ENCODE measurements at regions of chr5 and their contacts with region 1.

Region 1: DNA sequence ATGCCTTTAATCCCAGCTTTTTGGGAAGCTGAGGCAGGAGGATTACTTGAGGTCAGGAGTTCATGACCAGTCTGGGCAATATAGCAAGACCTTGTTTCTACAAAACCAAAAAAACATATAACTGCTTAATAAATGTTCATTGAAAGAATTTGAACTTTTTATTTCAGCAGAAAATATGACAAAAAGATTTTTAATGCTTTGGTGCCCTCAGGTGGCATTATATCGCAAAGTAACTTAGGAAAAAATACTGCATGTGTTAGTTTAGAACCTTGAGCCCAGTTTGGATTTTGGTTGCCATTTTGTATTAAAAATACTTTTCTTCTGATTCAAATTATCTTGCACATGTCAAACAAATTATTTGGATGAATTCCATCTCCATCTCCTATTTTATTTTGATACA is 103.2 kb downstream of the GPBP1 start:
- DNase-seq: no peak
- H3K4me3 ChIP-seq: no peak overlapping the region
- H3K27ac ChIP-seq: no peak overlapping the region
- H3K4me1 ChIP-seq: no peaks in the 10 kb centered on the region
- H3K27me3 ChIP-seq: no peaks in the 10 kb centered on the region
- CTCF ChIP-seq: peak; percentile 11 to 54 (median 46)
- POLR2A ChIP-seq: no peak

Region 2: GRCh38 chr5:56175488-56175887 is 1101.6 kb before region 1 on chr5:
- intact Hi-C with region 1: no loop called
- DNase-seq: peak in 6 of 7 donors; percentile 39 to 61 (median 59)
- H3K4me3 ChIP-seq: no peak overlapping the region
- H3K27ac ChIP-seq: peak overlapping the region in 2 of 5 donors; percentile 39 to 78
- H3K4me1 ChIP-seq: peaks cover 40 to 65% of the 10 kb centered on the region in 2 donors
- H3K27me3 ChIP-seq: no peaks in the 10 kb centered on the region
- CTCF ChIP-seq: no peak
- POLR2A ChIP-seq: no peak

Region 3: GRCh38 chr5:56270568-56271392 is 1006.3 kb before region 1 on chr5:
- intact Hi-C with region 1: loop called in 1 of 2 experiments (anchors 10 kb)
- DNase-seq: peak; percentile 78 to 94 (median 84)
- H3K4me3 ChIP-seq: no peak overlapping the region
- H3K27ac ChIP-seq: no peak overlapping the region
- H3K4me1 ChIP-seq: peaks cover 0 to 6% of the 10 kb centered on the region in 2 donors
- H3K27me3 ChIP-seq: no peaks in the 10 kb centered on the region
- CTCF ChIP-seq: peak; percentile 97 to 99 (median 99)
- POLR2A ChIP-seq: no peak

Region 4: GRCh38 chr5:56900858-56901578 is 376.1 kb before region 1 on chr5:
- intact Hi-C with region 1: loop called (anchors 5 to 10 kb)
- DNase-seq: peak in 4 of 7 donors; percentile 20 to 47 (median 41)
- H3K4me3 ChIP-seq: no peak overlapping the region
- H3K27ac ChIP-seq: no peak overlapping the region
- H3K4me1 ChIP-seq: peaks cover 0 to 3% of the 10 kb centered on the region in 2 donors
- H3K27me3 ChIP-seq: no peaks in the 10 kb centered on the region
- CTCF ChIP-seq: peak; percentile 51 to 83 (median 78)
- POLR2A ChIP-seq: no peak

Region 5: GRCh38 chr5:56909294-56910209 is 367.5 kb before region 1 on chr5 and contains the start of gene SETD9:
- intact Hi-C with region 1: loop called (anchors 5 to 10 kb)
- DNase-seq: peak; percentile 98 to 99 (median 99)
- H3K4me3 ChIP-seq: peak within 1 kb of the TSS; percentile 16 to 73 (median 59)
- H3K27ac ChIP-seq: peak within 1 kb of the TSS; percentile 82 to 99 (median 95)
- H3K4me1 ChIP-seq: peaks cover 0 to 6% of the 10 kb centered on the region in 2 donors
- H3K27me3 ChIP-seq: no peaks in the 10 kb centered on the region
- CTCF ChIP-seq: no peak
- POLR2A ChIP-seq: peak; percentile 57 to 87
- total RNA-seq, gene SETD9: 3.5 to 21.0 (median 11.0) TPM in 8 of 9 donors, not detected in the other